IMR-90 (cell line): ENCODE measurements at regions of chr10 and their contacts with region 1.

Region 1: DNA sequence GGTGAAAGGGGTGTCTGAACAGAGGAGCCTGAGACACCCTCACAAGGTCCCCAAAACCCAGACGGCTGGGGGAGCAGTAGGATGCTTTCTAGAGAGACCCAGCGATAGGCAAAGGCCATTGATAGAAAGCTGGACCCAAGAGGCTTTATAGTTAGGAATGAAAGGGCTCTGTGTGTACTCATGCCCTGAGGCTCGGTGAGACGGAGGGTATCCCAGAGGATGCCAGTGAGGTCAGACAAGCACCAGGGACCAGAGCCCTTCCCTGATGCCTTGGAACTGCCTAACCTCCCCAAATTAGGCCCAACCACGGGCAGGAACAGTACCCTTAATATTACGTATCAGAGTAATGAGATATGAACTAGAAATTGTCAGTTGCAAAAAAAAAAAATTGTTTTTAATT is 48.6 kb upstream of the RTKN2 start:
- DNase-seq: no peak
- ATAC-seq: no peak
- H3K4me3 ChIP-seq: no peak overlapping the region
- H3K27ac ChIP-seq: no peak overlapping the region
- H3K4me1 ChIP-seq: no peaks in the 10 kb centered on the region
- H3K27me3 ChIP-seq: no peaks in the 10 kb centered on the region; the same call in none of the 2 replicates
- CTCF ChIP-seq: no peak
- POLR2A ChIP-seq: no peak
- RAD21 ChIP-seq: no peak

Region 2: GRCh38 chr10:62284221-62284620 is 33.0 kb before region 1 on chr10:
- CTCF ChIA-PET with region 1: no interaction called
- POLR2A ChIA-PET with region 1: no interaction called
- dilution Hi-C with region 1: no loop called
- in situ Hi-C with region 1: no loop called
- intact Hi-C with region 1: loop called (anchors 5 kb)
- DNase-seq: no peak
- ATAC-seq: no peak
- H3K4me3 ChIP-seq: no peak overlapping the region
- H3K27ac ChIP-seq: no peak overlapping the region
- H3K4me1 ChIP-seq: no peaks in the 10 kb centered on the region
- H3K27me3 ChIP-seq: no peaks in the 10 kb centered on the region
- CTCF ChIP-seq: no peak
- POLR2A ChIP-seq: no peak
- RAD21 ChIP-seq: no peak

Region 3: DNA sequence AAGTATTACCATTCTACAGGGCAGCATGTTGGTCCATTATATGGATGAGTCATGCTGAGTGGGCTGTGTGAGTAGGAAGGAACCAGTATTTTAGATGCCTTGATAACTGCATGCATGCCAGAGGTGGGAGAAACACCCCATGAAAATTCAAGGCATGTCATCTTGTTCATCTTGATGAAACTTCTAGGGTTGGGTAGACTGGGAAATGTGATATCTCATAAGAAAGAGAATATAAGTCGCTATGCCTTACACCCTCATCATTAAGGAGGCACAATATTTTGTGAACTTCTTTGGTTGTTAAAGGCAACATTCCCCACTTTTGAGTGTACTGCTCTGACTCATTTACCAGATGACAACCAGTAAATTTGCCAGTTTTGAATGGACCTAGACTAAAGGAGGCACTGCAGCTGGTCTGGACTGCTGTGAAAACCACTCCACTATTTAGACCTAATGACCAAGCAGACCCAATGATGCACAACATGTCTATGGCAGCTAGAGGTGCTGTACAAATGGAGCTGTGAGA is 104.9 kb after region 1 on chr10:
- CTCF ChIA-PET with region 1: no interaction called
- POLR2A ChIA-PET with region 1: no interaction called
- dilution Hi-C with region 1: no loop called
- in situ Hi-C with region 1: no loop called
- intact Hi-C with region 1: no loop called
- DNase-seq: peak; percentile 90
- ATAC-seq: peak; percentile 88
- H3K4me3 ChIP-seq: no peak overlapping the region
- H3K27ac ChIP-seq: no peak overlapping the region
- H3K4me1 ChIP-seq: no peaks in the 10 kb centered on the region
- H3K27me3 ChIP-seq: no peaks in the 10 kb centered on the region; the same call in 1 of the 2 replicates
- CTCF ChIP-seq: peak; percentile 20; the same call in 1 of the 2 replicates
- POLR2A ChIP-seq: no peak
- RAD21 ChIP-seq: no peak